Common myeloid progenitor, CD34-positive (primary cell): ENCODE measurements at regions of chr2 and their contacts with region 1.

Region 1: GRCh38 chr2:41698678-41699422 is 349.0 kb upstream of the PKDCC start:
- DNase-seq: peak; percentile 31 to 52 (median 49)
- H3K4me3 ChIP-seq: peak overlapping the region in 1 of 7 experiments; percentile 49
- H3K27ac ChIP-seq: no peak overlapping the region
- H3K4me1 ChIP-seq: peaks cover 0 to 2% (median 1%) of the 10 kb centered on the region in 4 experiments
- H3K27me3 ChIP-seq: no peaks in the 10 kb centered on the region

Region 2: GRCh38 chr2:40448468-40449079 is 1250.3 kb before region 1 on chr2:
- CTCF ChIA-PET with region 1: interaction called, 10 read pairs
- POLR2A ChIA-PET with region 1: no interaction called
- DNase-seq: peak; percentile 56 to 72 (median 67)
- H3K4me3 ChIP-seq: no peak overlapping the region
- H3K27ac ChIP-seq: no peak overlapping the region
- H3K4me1 ChIP-seq: peaks cover 14 to 25% (median 18%) of the 10 kb centered on the region in 4 experiments
- H3K27me3 ChIP-seq: peaks cover 0 to 13% (median 6%) of the 10 kb centered on the region in 5 experiments

Region 3: DNA sequence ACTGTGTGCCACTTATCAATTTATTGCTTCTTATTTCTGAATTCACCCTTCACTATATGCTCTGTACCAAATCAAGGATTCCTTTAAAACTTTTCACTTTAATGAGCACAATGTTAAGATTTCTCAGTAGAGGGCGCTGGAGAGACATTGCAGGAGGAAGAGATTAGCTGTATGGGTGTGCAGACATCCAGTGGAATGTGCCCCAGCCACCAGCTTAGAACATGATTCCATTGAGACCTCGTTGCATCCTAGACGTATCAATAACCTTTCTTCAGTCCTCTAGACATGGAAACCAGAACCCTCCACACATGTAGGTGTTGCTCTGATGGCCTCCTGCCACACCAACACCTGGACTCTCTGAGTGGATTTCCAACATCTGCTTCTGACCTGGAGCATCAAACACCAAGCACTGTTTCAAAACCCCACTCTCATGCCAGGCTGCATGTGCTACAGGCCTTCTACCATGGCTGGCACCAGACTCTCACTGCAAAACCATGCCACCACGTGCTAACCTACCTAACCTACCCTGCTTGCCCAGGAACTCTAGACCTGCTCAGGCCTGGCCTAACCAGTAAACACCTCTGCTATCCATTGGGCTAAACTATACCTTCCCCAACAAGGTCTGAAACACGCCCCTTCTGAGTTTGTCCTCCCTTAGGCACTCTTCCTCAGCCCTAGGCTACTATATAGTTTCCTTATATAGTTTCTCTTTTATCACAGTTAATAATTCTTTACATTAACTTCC is 284.2 kb before region 1 on chr2:
- CTCF ChIA-PET with region 1: interaction called, 21 read pairs
- POLR2A ChIA-PET with region 1: no interaction called
- DNase-seq: peak; percentile 31 to 67 (median 58)
- H3K4me3 ChIP-seq: no peak overlapping the region
- H3K27ac ChIP-seq: no peak overlapping the region
- H3K4me1 ChIP-seq: no peaks in the 10 kb centered on the region
- H3K27me3 ChIP-seq: no peaks in the 10 kb centered on the region

Region 4: GRCh38 chr2:41814963-41815362 is 116.1 kb after region 1 on chr2:
- CTCF ChIA-PET with region 1: no interaction called
- POLR2A ChIA-PET with region 1: no interaction called
- DNase-seq: no peak
- H3K4me3 ChIP-seq: no peak overlapping the region
- H3K27ac ChIP-seq: no peak overlapping the region
- H3K4me1 ChIP-seq: no peaks in the 10 kb centered on the region
- H3K27me3 ChIP-seq: peaks cover 0 to 6% (median 3%) of the 10 kb centered on the region in 5 experiments

Region 5: GRCh38 chr2:42102024-42102590 is 403.3 kb after region 1 on chr2:
- CTCF ChIA-PET with region 1: no interaction called
- POLR2A ChIA-PET with region 1: no interaction called
- DNase-seq: peak; percentile 82 to 97 (median 97)
- H3K4me3 ChIP-seq: peak overlapping the region in 5 of 7 experiments; percentile 11 to 63 (median 58)
- H3K27ac ChIP-seq: peak overlapping the region; percentile 22 to 36
- H3K4me1 ChIP-seq: peaks cover 5 to 51% (median 34%) of the 10 kb centered on the region in 4 experiments
- H3K27me3 ChIP-seq: peaks cover 0 to 31% (median 6%) of the 10 kb centered on the region in 5 experiments